ENCODE measurements at regions of chr17 and their contacts with region 1.

Region 1: DNA sequence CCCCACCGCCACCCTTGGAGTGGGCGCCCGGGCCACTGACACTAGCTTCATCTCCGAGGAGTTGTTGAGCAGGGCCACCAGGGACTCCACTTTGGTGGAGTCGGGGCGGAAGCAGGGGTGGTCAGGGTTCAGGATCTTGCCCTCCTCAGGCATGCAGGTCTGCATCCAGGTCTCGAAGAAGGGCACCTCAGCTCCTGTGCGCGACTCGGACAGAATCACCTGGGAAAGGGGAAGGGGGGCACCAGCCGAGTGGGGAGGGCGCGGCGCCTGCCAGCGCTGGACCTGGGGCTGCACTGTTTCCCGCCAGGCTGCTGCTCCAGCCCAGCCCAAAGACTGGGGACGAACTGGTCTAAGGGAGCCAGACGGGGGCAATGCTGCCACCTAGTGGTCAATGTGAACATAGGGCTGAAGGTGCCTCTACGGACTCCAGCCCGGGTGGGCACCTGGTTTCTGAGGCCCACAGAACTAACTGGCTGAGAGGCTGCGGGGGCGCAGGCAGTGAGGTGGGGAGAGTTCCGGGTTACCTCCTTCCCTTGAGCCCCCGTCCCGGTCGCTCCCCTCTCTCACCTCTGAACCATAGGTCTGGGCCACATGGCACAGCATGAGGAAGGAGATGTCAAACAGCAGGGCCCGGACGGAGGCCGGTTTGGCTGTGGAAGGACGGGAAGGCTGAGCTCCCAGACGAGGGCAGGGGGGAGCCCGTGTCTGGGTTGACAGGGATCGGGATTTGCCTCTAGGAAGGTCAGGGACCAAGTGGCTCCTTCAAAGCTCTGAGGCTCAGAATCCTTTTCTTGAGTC is 11.8 kb downstream of the CSF3 start:
- DNase-seq: peak; percentile 68 to 90
- H3K4me3 ChIP-seq: no peak overlapping the region
- H3K27ac ChIP-seq: no peak overlapping the region
- H3K4me1 ChIP-seq: no peaks in the 10 kb centered on the region
- H3K27me3 ChIP-seq: no peaks in the 10 kb centered on the region
- CTCF ChIP-seq: peak; percentile 91 to 97 (median 96)
- EP300 ChIP-seq: no peak
- POLR2A ChIP-seq: no peak
- RAD21 ChIP-seq: peak; percentile 80 to 86

Region 2: GRCh38 chr17:39999067-39999466 is 27.9 kb before region 1 on chr17:
- CTCF ChIA-PET with region 1: interaction called, 11 read pairs
- POLR2A ChIA-PET with region 1: no interaction called
- DNase-seq: no peak
- H3K4me3 ChIP-seq: no peak overlapping the region
- H3K27ac ChIP-seq: no peak overlapping the region
- H3K4me1 ChIP-seq: no peaks in the 10 kb centered on the region
- H3K27me3 ChIP-seq: no peaks in the 10 kb centered on the region
- CTCF ChIP-seq: no peak
- EP300 ChIP-seq: no peak
- POLR2A ChIP-seq: no peak
- RAD21 ChIP-seq: no peak

Region 3: DNA sequence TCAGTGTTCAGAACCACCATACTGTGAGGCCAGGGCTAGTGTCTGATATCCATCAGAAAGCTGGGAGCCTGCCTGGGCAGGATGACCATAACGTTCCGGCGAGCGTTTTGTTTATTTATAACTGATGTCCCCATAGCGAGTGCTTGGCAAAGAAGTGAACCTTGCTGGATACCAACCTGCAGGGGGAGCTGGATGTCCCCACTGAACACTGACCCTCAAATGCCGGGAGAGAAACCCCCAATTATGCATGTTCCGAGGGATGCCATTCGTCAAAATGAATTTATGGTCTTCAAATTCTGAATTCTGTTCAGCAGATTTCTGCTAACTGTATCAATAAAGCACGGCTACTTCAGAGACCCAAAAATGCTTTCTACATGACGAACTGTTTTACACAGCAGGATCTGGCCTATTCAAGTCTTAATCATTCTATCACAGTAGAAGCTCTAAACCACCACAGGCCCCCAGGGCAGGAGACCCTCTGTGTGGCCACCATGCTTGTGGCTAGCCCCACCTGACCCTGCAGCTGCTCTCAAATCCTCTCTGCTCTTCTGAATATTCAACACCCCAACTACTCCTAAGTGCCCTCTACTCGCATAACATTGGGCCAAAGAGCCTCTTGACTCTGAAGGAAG is 12.0 kb after region 1 on chr17:
- CTCF ChIA-PET with region 1: interaction called, 72 read pairs
- POLR2A ChIA-PET with region 1: interaction called, 10 read pairs
- DNase-seq: peak in 1 of 2 experiments; percentile 64
- H3K4me3 ChIP-seq: no peak overlapping the region
- H3K27ac ChIP-seq: no peak overlapping the region
- H3K4me1 ChIP-seq: peaks cover 0 to 12% (median 4%) of the 10 kb centered on the region in 4 experiments; a peak in 5 of 7 replicates
- H3K27me3 ChIP-seq: no peaks in the 10 kb centered on the region
- CTCF ChIP-seq: peak; percentile 69 to 78 (median 72)
- EP300 ChIP-seq: no peak
- POLR2A ChIP-seq: no peak
- RAD21 ChIP-seq: peak; percentile 49 to 70

Region 4: DNA sequence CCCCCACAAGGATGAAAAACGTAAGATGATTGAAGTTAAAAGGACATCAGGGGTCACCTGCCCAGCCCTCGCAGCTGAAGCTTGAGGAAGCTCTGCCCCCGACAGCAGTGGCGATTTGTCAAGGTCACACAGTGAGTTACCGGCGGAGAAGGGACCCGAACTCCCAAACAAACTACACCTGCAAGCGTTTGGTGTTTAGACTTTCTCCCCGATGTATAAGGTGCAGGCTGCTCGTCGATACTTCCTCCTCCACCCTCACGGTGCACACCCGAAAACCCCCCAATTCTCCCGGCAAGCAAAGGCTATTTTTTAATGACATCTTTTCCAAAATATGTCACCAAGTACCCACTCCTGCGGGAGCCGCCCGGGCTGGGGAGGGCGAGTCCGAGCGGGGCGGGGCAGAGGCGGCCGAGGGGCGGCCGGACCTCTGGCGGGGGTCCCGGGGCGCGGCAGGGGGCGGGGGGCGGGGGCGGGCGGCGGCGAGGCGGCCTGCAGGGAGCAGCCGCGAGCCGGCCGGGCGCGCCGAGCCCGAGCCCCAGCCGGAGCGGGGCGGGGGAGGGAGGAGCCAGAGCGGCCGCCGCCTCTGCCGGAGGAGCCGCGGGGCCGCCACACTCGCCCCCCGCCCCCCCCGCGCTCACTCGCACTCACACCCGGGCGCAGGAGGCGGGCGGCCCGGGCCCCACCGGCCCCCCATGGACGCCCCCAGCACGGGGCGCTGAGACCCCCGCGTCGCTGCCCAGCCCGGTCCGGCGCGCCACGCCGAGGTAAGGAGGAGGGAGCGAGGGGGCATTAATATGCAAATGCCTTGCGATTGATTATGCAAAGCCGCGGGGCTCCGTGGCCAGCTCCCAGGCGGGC is 35.5 kb after region 1 on chr17 and contains the start of gene THRA:
- CTCF ChIA-PET with region 1: interaction called, 876 read pairs
- POLR2A ChIA-PET with region 1: interaction called, 3 read pairs
- DNase-seq: peak in 1 of 2 experiments; percentile 89
- H3K4me3 ChIP-seq: peak within 1 kb of the TSS; percentile 78 to 87 (median 81)
- H3K27ac ChIP-seq: peak within 1 kb of the TSS; percentile 60; the same call in 1 of the 2 replicates
- H3K4me1 ChIP-seq: peaks cover 21 to 46% (median 31%) of the 10 kb centered on the region in 4 experiments
- H3K27me3 ChIP-seq: peaks cover 0 to 15% (median 10%) of the 10 kb centered on the region in 4 experiments; a peak in 6 of 7 replicates
- CTCF ChIP-seq: no peak; a peak in 1 of 4 replicates
- EP300 ChIP-seq: no peak
- POLR2A ChIP-seq: no peak
- RAD21 ChIP-seq: no peak
- total RNA-seq, gene THRA: 10.2 and 11.8 TPM in 2 replicates

Measured in H1 (cell line).